Activated CD4-positive, alpha-beta T cell treated with anti-CD3 and anti-CD28 coated beads, Interleukin-2, amount 10 ng/mL, durations not matched to agents 24 days and 14 days (primary cell): ENCODE measurements at regions of chr15 and their contacts with region 1.

Region 1: DNA sequence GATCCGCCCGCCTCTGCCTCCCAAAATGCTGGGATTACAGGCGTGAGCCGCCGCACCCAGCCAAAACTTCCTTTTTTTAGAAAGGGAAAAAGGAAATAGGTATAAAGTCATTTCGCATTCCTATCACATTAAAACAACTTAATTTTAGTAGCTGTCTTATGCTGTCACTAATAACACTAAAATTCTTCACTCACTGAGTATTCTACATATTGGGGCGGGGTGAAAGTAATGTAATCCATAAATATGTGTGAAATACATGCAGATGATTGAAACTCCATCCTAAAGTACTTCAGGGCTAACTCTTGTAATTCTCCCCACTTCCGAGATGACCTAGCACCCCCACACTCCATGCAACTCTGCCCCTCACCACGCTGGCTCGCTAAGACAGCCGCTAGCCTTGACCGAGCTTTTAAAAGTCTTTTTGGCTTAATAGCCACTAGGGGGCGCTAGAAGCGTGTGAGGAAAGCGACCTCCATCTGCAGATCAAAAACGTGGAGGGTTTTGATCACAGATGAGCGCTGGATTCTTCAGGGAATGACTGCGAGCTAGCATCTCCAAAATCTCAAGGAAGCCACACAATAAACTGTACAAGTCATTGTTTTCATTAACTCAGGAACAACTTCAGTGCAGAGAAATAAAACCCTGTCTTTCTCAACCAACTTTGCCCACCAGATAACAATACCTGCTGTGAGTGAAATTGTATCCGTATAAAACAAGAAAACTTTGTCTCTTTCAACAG is 129.3 kb upstream of the IGF1R start:
- DNase-seq: peak; percentile 83
- H3K4me3 Mint-ChIP-seq: no peak overlapping the region
- H3K27ac Mint-ChIP-seq: no peak overlapping the region
- H3K4me1 Mint-ChIP-seq: peaks cover 5% of the 10 kb centered on the region
- H3K27me3 Mint-ChIP-seq: peaks cover 4% of the 10 kb centered on the region

Region 2: DNA sequence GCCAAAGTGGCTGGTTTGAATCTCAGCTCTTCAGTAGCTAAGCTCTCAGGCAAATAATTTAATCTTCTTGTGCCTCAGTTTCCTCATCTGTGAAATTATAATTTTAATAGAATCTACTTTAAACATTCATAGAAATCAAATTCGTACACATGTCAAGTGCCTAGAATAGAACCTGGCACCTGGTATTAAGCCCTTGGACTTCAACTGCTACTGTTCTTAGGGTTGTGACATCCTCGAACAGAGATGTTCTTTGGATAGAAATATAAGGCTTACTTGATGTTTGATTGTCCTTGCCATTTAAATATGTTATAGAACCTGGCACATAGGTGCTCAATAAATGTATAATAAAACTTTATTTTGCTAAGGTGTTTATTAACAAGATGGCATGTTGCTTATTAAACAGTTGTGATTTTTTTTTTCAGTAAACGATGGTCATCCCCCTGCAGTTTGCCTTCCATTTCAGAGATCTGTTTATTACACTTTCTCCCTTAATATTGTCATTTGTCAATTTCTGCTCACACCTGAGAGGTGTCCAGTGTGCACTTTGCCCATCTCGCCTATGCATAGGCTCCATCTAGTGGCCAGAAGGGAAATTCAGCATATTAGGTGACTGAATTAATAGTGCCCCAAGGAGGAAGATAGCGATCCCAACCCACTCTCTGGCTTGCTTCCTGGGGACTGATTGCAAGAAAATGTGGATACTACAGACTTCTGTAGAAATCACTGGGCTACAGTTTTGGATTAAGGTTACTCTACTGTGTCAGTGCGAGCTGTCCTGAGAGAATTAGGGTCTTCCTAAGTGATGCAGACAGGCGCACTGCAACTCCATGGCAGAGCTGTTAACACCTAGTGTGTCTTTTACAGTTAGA is 140.1 kb after region 1 on chr15:
- intact Hi-C with region 1: loop called (anchors 1 kb)
- DNase-seq: peak; percentile 84
- H3K4me3 Mint-ChIP-seq: no peak overlapping the region
- H3K27ac Mint-ChIP-seq: no peak overlapping the region
- H3K4me1 Mint-ChIP-seq: peaks cover 7% of the 10 kb centered on the region
- H3K27me3 Mint-ChIP-seq: peaks cover 12% of the 10 kb centered on the region

Region 3: GRCh38 chr15:98779463-98780071 is 260.6 kb after region 1 on chr15:
- intact Hi-C with region 1: loop called (anchors 5 kb)
- DNase-seq: peak; percentile 92
- H3K4me3 Mint-ChIP-seq: no peak overlapping the region
- H3K27ac Mint-ChIP-seq: no peak overlapping the region
- H3K4me1 Mint-ChIP-seq: peaks cover 23% of the 10 kb centered on the region
- H3K27me3 Mint-ChIP-seq: no peaks in the 10 kb centered on the region

Region 4: DNA sequence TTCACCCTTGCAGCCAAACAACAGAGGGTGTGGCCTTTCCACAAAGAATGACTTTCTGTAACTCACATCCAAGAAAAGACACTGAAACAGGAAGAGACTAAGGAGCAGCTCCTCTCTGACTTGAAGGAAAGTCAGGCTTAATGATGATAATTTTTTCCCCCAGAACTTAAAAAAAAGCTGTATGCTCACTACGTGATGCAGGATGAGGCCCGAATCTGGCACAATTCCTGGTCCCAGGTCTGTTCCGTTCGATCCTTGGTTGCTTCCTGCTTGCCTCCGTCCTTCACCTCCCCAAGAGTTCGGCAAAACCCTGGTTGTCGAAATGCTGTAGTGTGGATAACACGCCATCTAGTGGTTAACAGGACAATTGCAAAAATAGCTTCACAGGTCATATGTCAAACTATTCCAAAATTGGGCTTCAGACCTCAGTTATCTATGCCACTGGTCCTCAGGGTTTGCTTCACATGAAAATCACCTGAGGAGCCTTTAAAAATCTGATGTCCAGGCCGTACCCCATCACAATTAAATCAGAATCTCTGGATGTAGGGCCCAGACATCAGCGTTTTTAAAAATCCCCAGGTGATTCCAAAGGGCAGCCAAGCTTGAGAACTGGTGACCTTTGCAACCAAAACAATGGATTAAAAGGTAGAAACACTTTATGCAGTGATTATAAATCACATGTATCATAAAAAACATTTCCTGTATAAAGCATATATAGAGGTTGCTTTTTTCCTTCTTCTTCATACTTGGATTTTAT is 557.7 kb after region 1 on chr15:
- intact Hi-C with region 1: loop called (anchors 1 kb)
- DNase-seq: peak; percentile 84
- H3K4me3 Mint-ChIP-seq: peak overlapping the region; percentile 78
- H3K27ac Mint-ChIP-seq: no peak overlapping the region
- H3K4me1 Mint-ChIP-seq: peaks cover 5% of the 10 kb centered on the region
- H3K27me3 Mint-ChIP-seq: peaks cover 22% of the 10 kb centered on the region